ENCODE measurements at regions of chr4 and their contacts with region 1.

Region 1: DNA sequence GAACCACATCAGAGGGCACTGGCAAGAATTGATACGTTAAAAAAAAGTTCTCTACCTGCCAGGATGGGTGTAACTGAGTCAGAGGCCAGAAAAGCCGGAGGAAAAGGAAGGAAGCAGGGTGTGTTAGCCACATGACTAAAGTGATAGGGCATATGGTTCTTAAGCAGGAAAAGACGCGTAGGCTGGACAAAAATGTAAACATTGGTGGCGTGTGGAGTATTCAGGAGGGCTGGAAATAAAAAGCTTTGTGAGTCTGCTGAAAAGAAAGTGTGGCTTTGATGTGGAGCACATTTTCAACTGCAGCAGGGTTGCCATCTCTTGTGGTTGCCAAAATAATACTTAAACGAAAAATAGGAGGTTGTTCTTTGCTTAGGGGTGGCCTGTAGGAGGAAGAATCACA is 186.5 kb upstream of the RPL34 start:
- DNase-seq: peak; percentile 47
- H3K4me3 Mint-ChIP-seq: peak overlapping the region; percentile 28
- H3K27ac Mint-ChIP-seq: peak overlapping the region; percentile 80
- H3K4me1 Mint-ChIP-seq: peaks cover 39% of the 10 kb centered on the region
- H3K27me3 Mint-ChIP-seq: no peaks in the 10 kb centered on the region

Region 2: DNA sequence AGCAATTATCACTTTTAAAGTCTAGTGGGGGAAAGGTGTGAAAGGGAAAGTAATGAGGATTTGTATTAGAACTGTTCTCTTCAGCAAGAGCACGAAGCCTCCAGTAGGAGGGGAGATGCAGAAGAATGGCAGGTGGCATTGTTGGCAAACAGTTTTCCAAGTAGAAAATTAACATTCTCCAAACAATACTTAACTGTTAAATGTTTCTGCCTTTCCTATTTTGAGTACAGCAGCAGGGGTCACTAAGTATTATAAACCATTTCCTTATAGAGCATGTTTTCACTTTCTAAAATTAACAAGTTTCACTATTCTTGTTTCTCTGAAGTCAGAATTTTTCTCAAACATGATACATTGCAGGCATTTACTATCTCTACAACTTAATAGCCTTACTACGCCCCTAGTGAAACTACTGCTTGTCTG is 323.8 kb before region 1 on chr4:
- intact Hi-C with region 1: loop called (anchors 2 kb)
- DNase-seq: no peak
- H3K4me3 Mint-ChIP-seq: peak overlapping the region; percentile 37
- H3K27ac Mint-ChIP-seq: peak overlapping the region; percentile 67
- H3K4me1 Mint-ChIP-seq: peaks cover 95% of the 10 kb centered on the region
- H3K27me3 Mint-ChIP-seq: no peaks in the 10 kb centered on the region

Region 3: DNA sequence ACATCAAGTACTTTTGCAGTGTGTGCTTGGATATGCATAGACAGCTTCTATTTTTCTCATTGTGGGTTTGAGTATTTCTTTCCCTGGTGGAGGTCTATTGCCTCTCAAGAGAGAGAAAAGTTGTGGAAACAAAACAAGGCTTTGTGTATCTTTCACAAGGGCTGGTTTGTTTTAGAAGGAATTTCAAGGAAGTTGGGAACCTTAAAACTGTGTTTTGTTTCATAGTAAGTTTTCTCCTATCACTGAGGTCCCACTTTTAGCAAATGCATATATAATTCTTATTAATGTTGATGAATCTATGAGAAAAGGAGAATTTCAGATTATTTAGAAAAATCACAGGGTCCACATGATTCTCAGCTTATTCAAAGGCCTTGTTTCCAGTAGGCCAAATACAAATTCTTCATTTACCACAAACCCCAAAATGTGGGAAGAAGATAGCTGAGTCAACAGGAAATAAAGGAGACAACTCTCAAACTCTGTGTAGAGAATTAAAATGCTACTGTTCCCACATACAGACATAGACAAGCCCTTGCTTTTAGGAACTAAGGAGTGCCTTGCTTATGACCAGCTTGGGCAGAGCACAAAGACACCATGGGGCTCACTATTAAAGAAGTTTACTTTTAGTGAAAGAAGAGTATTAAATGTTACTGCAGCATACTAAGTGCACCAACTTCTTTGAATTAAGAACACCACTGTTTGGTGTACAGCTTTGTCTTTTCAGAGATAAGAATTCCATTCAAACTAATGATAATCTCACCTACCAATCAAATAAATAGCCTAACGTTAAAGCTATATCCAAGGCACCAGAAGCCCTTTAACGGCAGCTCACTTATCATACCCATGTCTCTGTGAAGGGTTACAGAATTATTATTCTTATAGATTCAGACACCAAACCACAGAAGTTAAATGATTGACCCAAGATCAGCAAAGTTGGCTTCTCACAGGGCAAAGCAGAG is 87.7 kb before region 1 on chr4:
- intact Hi-C with region 1: loop called (anchors 5 kb)
- DNase-seq: no peak
- H3K4me3 Mint-ChIP-seq: peak overlapping the region; percentile 28
- H3K27ac Mint-ChIP-seq: no peak overlapping the region
- H3K4me1 Mint-ChIP-seq: peaks cover 44% of the 10 kb centered on the region
- H3K27me3 Mint-ChIP-seq: no peaks in the 10 kb centered on the region

Region 4: DNA sequence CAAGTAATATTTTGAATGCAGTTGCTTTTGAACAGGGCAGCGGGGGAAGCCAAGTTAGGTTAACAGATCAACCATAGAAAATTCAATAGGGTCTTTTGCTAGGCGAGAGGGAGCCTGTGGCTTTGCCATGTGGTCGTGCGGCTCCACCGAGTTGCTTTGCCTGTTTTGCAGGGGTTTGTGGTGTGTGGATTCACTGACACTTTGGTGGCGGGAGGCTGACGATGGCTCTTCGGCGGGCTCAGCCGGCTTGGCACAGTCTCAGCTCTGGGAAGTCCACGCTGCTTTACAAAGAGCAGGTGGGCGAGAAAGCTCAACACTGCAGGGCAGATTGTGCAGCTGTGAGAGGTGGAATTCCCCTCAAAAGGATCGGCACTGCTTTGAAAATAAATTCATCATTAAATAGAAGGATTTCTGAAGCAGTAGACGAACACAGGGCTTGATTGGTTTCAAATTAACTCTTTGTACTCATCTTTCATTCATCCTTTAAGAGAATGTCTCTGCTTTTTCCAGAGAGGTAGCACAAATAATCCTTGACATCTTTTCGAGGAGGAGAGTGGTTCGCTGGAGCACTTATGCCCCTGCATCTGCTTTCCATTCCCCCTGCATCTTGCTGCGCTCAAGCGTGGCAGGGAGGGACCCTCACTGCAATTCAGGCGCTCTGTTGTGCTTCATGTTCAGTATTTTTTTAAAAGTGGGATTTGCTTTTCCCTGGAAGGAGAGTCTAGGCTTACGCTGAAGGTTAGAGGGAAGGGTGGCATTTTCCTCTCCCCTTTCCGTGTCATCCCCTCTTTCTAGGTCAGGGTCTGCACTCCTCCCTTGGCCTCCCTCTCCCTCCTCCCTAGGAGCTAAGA is 63.3 kb before region 1 on chr4:
- intact Hi-C with region 1: no loop called
- DNase-seq: peak; percentile 16
- H3K4me3 Mint-ChIP-seq: peak overlapping the region; percentile 52
- H3K27ac Mint-ChIP-seq: peak overlapping the region; percentile 9
- H3K4me1 Mint-ChIP-seq: peaks cover 48% of the 10 kb centered on the region
- H3K27me3 Mint-ChIP-seq: peaks cover 17% of the 10 kb centered on the region

Region 5: DNA sequence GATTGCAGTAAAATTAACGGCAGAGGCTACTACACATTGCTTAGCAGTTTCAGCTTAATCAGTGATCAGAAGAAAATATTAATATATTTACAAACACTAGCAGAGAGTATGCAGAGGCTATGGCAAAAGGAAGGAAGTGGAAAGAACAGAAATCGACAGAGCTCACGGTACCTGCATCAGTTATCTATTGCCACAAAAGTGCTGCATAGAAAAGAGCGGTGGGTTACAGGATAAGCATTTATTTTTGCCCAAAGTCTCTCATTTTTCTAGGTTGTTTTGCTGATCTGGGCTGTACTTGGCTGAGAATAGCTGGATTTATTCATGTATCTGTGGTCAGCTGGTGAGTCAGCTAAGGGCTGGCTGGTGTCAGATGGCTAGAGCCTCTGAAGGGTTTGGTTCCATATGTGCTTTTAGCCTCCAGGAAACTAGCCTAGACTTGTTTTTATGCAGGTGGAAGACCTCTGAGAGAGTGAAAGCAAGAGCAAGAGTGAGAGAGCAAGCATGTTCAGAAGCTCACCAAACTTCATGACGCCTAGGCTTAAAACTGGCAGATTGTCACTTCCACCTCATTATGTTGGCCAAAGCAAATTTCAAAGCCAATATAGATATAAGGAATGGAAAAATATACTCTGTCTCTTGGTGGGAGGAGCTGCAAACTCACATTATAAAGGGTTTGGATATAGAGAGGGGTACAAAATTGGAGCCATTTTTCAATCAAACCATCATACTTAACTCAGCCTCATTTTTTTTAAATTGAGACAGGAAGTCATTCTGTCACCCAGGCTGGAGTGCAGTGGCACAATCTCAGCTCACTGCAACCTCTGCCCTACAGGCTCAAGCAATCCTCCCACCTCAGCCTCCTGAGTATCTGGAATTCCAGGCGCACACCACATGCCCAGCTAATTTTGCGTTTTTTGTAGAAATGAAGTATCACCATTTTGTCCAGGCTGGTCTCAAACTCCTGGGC is 33.4 kb after region 1 on chr4:
- intact Hi-C with region 1: loop called (anchors 1 kb)
- DNase-seq: peak; percentile 23
- H3K4me3 Mint-ChIP-seq: peak overlapping the region; percentile 69
- H3K27ac Mint-ChIP-seq: peak overlapping the region; percentile 87
- H3K4me1 Mint-ChIP-seq: peaks cover 37% of the 10 kb centered on the region
- H3K27me3 Mint-ChIP-seq: peaks cover 5% of the 10 kb centered on the region

Region 6: DNA sequence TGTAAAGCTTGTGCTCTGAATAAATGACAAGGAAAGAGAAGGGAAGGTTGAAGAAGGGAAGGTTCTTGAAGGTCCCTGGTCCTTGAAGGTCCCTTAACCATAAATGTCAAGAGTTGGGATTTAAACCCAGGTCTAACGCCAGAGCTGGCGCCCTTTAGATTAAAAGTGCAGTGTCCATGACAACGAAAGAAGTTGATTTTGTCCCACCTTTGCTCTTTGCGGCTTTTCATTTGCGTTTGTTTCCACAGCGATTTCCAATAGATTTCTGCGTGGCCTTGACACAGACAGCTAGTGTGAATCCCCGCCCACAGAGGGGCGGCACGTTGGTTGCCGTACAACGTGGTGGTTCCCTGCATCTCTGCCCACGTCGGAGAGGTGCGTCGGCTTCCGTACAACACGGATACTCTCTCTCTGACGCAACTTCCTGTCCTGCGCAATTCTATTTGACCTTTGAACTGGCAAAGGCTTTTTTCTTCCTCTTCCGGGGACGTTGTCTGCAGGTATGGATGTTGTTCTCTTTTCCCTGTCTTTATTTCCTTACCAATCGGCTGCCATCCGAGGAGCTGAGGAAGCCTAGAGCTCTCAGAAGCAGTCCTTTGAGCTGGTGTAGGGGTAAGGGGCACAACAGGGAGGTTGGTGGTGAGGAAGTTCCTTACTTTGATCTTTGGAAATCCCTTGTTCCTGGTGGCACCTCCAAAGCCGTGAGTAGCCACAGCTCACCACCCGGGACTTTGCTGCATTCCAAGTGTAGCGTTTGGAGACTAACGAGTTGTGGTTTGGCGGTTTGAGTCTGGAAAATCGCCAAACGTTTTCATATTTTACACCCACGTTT is 186.5 kb after region 1 on chr4 and contains the start of gene RPL34:
- intact Hi-C with region 1: loop called (anchors 2 kb)
- DNase-seq: peak; percentile 96
- H3K4me3 Mint-ChIP-seq: peak within 1 kb of the TSS; percentile 98
- H3K27ac Mint-ChIP-seq: peak within 1 kb of the TSS; percentile 97
- H3K4me1 Mint-ChIP-seq: peaks cover 43% of the 10 kb centered on the region
- H3K27me3 Mint-ChIP-seq: no peaks in the 10 kb centered on the region
- total RNA-seq, gene RPL34: 1,258 and 1,304 TPM in 2 replicates

Measured in activated T-helper 1 cell treated with anti-CD3 and anti-CD28 coated beads, Interleukin-12 subunit alpha, Interleukin-12 subunit beta, Interleukin-2, Interleukin-4 antibody, amounts not matched to agents 30 ng/mL and 10 ng/mL and 1 ng/mL, durations not matched to agents 14 hours and 24 hours and 36 hours (primary cell).